Left ventricle myocardium inferior (tissue), 1 donor: ENCODE measurements at regions of chr12 and their contacts with region 1.

Region 1: GRCh38 chr12:19186722-19187661 is 57.5 kb downstream of the PLEKHA5 start:
- DNase-seq: no peak
- H3K4me3 ChIP-seq: no peak overlapping the region
- H3K27ac ChIP-seq: peak overlapping the region; percentile 77
- H3K4me1 ChIP-seq: peaks cover 91% of the 10 kb centered on the region
- H3K27me3 ChIP-seq: no peaks in the 10 kb centered on the region
- CTCF ChIP-seq: peak; percentile 73

Region 2: DNA sequence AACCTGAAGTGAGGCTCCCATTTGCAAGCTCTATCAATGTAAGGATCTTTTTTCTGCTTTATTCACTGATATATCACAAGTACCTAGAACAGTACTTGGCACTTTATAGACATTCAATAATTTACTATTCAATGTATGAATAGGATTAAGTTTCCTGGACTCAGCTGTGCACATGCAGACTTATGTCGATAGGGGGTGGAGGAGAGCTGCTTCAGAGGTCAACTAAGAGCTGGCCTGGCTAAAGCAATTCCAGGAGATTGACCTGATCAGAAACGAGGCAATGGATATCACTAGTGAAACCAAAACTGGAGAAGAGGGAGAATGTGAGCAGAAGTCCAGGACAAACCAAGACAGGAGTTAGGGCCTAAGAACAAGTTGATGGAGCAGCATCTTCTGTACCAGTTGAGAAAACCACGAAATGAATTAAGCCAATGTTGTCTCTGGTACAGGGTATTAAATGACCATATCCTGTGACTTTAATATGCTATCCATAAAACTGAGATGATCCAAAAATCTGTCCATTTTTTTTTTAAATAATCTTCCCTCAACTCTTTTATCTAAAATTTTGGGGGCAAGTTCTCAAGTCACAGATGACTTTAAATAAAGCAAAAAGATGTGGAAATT is 756.5 kb before region 1 on chr12:
- intact Hi-C with region 1: loop called (anchors 10 kb)
- DNase-seq: peak; percentile 24
- H3K4me3 ChIP-seq: no peak overlapping the region
- H3K27ac ChIP-seq: no peak overlapping the region
- H3K4me1 ChIP-seq: peaks cover 16% of the 10 kb centered on the region
- H3K27me3 ChIP-seq: no peaks in the 10 kb centered on the region
- CTCF ChIP-seq: peak; percentile 88

Region 3: GRCh38 chr12:18861287-18861858 is 325.6 kb before region 1 on chr12:
- intact Hi-C with region 1: loop called (anchors 2 kb)
- DNase-seq: no peak
- H3K4me3 ChIP-seq: no peak overlapping the region
- H3K27ac ChIP-seq: no peak overlapping the region
- H3K4me1 ChIP-seq: peaks cover 21% of the 10 kb centered on the region
- H3K27me3 ChIP-seq: no peaks in the 10 kb centered on the region
- CTCF ChIP-seq: peak; percentile 61

Region 4: GRCh38 chr12:19031032-19031431 is 156.0 kb before region 1 on chr12:
- intact Hi-C with region 1: loop called (anchors 10 kb)
- DNase-seq: no peak
- H3K4me3 ChIP-seq: no peak overlapping the region
- H3K27ac ChIP-seq: no peak overlapping the region
- H3K4me1 ChIP-seq: peaks cover 11% of the 10 kb centered on the region
- H3K27me3 ChIP-seq: no peaks in the 10 kb centered on the region
- CTCF ChIP-seq: no peak

Region 5: GRCh38 chr12:19045426-19045825 is 141.6 kb before region 1 on chr12:
- intact Hi-C with region 1: no loop called
- DNase-seq: no peak
- H3K4me3 ChIP-seq: no peak overlapping the region
- H3K27ac ChIP-seq: peak overlapping the region; percentile 27
- H3K4me1 ChIP-seq: no peaks in the 10 kb centered on the region
- H3K27me3 ChIP-seq: no peaks in the 10 kb centered on the region
- CTCF ChIP-seq: no peak

Region 6: DNA sequence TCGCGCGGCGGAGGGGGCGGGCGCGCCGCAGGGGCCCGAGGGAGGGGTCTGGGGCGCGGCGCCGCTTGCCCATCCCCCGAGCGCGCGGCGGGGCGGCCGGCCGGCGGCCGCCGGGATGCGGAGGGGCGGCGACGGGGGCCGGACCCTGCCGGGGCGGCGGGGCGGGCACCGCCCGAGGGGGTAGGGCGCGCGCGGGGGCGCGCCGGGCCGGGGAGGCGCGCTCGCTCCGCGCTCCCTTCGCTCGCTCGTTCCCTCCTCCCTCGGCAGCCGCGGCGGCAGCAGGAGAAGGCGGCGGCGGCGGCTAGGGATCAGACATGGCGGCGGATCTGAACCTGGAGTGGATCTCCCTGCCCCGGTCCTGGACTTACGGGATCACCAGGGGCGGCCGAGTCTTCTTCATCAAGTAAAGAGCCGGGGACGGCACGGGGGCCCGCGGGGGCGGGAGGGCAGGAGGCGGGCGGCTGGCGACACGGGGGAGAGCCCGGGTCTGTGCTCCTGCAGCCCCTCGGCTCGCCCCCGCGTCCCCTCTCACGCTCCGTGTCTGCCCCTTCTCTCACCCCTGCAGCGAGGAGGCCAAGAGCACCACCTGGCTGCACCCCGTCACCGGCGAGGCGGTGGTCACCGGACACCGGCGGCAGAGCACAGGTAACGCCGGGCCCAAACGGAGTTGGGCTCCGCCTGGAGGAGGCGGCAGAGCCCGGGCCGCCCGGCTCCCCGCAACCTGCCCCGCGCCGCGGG is 57.3 kb before region 1 on chr12 and contains the start of gene PLEKHA5:
- intact Hi-C with region 1: loop called (anchors 5 kb)
- DNase-seq: peak; percentile 81
- H3K4me3 ChIP-seq: peak within 1 kb of the TSS; percentile 91
- H3K27ac ChIP-seq: peak within 1 kb of the TSS; percentile 92
- H3K4me1 ChIP-seq: peaks cover 42% of the 10 kb centered on the region
- H3K27me3 ChIP-seq: no peaks in the 10 kb centered on the region
- CTCF ChIP-seq: peak; percentile 35
- total RNA-seq, gene PLEKHA5: 60.8 TPM

Region 7: DNA sequence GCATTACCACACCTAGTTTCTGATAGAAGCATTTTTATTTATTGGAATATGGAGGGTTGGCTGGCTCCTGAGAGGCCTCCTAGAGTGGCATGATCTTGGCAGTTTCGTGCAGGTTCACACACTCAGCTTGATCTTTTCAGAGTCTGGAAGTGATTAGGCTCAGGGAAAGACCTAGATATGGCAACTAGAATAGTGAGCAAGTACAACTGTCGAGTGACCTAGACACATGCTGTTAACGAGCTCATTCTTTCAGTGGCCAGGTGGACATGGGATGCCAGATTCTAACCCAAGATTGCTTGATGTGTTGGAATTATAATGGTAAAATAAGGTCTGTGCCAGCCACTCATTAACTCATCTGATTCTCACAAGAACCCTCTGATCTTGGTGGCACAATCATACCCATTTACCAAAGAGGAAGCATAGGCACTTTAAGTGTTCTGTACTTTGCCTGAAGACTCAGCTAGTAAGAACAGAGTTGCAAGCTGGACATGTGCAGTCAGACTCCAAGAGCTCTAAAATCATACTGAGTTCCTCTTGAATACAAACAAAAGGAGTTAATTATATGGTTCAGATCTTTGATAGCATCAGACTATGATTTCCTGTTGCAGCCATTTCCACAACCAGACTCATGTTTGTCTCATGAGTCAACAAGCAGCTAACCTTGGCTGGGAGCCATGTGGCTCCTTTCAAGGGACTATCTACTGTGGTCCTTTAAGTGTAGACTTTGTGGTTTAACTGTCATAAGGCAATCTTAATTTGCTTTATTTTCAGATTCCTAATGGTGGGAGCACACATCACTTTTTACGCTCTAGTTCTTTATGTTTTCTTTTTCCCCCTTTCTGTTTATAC is 86.7 kb after region 1 on chr12:
- intact Hi-C with region 1: no loop called
- DNase-seq: peak; percentile 67
- H3K4me3 ChIP-seq: no peak overlapping the region
- H3K27ac ChIP-seq: peak overlapping the region; percentile 30
- H3K4me1 ChIP-seq: peaks cover 34% of the 10 kb centered on the region
- H3K27me3 ChIP-seq: no peaks in the 10 kb centered on the region
- CTCF ChIP-seq: no peak

Region 8: GRCh38 chr12:19288603-19289244 is 101.7 kb after region 1 on chr12:
- intact Hi-C with region 1: loop called (anchors 10 kb)
- DNase-seq: no peak
- H3K4me3 ChIP-seq: no peak overlapping the region
- H3K27ac ChIP-seq: no peak overlapping the region
- H3K4me1 ChIP-seq: peaks cover 5% of the 10 kb centered on the region
- H3K27me3 ChIP-seq: no peaks in the 10 kb centered on the region
- CTCF ChIP-seq: peak; percentile 73